Naive thymus-derived CD4-positive, alpha-beta T cell (primary cell): ENCODE measurements at regions of chr5 and their contacts with region 1.

Region 1: GRCh38 chr5:80975065-80975464 is 14.9 kb downstream of the RASGRF2 start:
- DNase-seq: no peak
- ATAC-seq: no peak
- H3K4me3 ChIP-seq: no peak overlapping the region
- H3K4me3 Mint-ChIP-seq: peak overlapping the region in 5 of 10 donors; percentile 2 to 74 (median 8)
- H3K27ac ChIP-seq: no peak overlapping the region
- H3K27ac Mint-ChIP-seq: peak overlapping the region in 6 of 9 donors; percentile 20 to 86 (median 52)
- H3K4me1 ChIP-seq: peaks cover 11 to 47% of the 10 kb centered on the region in 2 donors
- H3K4me1 Mint-ChIP-seq: peaks cover 22 to 91% (median 84%) of the 10 kb centered on the region in 7 donors
- H3K27me3 ChIP-seq: no peaks in the 10 kb centered on the region
- H3K27me3 Mint-ChIP-seq: no peaks in the 10 kb centered on the region

Region 2: DNA sequence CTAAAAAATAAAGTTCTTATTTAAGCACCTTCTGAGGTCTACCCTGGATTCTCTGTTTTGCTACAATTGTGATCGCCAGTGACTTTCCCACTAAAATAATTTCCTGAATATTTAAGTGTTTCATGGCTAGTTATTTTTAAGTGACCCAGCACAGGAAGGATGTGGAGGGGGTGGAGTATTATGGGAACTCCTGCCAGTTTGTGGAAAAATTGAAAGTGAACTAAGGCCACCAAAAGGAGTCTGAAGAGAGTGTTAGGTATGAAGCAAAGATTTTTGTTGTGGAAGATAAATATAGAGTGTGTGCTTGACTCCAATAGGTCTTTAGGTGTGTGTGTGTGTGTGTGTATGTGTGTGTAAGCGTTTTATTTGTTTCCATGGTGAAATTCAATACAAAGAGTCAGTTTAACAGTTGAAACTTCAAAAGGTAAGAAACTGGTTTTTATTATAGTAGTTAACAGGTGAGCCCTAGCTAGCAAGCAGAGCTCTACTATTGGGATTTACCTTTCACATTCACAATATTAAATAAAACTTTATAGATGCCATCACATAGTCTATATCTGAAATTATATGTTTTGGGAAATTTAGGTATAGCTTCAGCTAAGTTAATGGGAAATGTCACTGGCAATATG is 10.6 kb after region 1 on chr5:
- CTCF ChIA-PET with region 1: interaction called, 6 read pairs
- POLR2A ChIA-PET with region 1: interaction called, 20 read pairs
- intact Hi-C with region 1: loop called in 1 of 2 experiments (anchors 1 kb)
- DNase-seq: peak in 1 of 9 donors; percentile 11
- ATAC-seq: peak; percentile 42
- H3K4me3 ChIP-seq: no peak overlapping the region
- H3K4me3 Mint-ChIP-seq: peak overlapping the region in 7 of 10 donors; percentile 2 to 46 (median 30)
- H3K27ac ChIP-seq: peak overlapping the region; percentile 36
- H3K27ac Mint-ChIP-seq: peak overlapping the region in 7 of 9 donors; percentile 6 to 83 (median 69)
- H3K4me1 ChIP-seq: peaks cover 3 to 38% of the 10 kb centered on the region in 2 donors
- H3K4me1 Mint-ChIP-seq: peaks cover 36 to 91% (median 85%) of the 10 kb centered on the region in 7 donors
- H3K27me3 ChIP-seq: no peaks in the 10 kb centered on the region
- H3K27me3 Mint-ChIP-seq: no peaks in the 10 kb centered on the region

Region 3: GRCh38 chr5:81140943-81141342 is 165.9 kb after region 1 on chr5:
- CTCF ChIA-PET with region 1: no interaction called
- POLR2A ChIA-PET with region 1: no interaction called
- intact Hi-C with region 1: no loop called
- DNase-seq: no peak
- ATAC-seq: no peak
- H3K4me3 ChIP-seq: no peak overlapping the region
- H3K4me3 Mint-ChIP-seq: no peak overlapping the region
- H3K27ac ChIP-seq: no peak overlapping the region
- H3K27ac Mint-ChIP-seq: no peak overlapping the region
- H3K4me1 ChIP-seq: no peaks in the 10 kb centered on the region
- H3K4me1 Mint-ChIP-seq: peaks cover 0 to 27% (median 8%) of the 10 kb centered on the region in 7 donors
- H3K27me3 ChIP-seq: no peaks in the 10 kb centered on the region
- H3K27me3 Mint-ChIP-seq: no peaks in the 10 kb centered on the region